Ascending aorta (tissue), 2 donors: ENCODE measurements at regions of chr10 and their contacts with region 1.

Region 1: DNA sequence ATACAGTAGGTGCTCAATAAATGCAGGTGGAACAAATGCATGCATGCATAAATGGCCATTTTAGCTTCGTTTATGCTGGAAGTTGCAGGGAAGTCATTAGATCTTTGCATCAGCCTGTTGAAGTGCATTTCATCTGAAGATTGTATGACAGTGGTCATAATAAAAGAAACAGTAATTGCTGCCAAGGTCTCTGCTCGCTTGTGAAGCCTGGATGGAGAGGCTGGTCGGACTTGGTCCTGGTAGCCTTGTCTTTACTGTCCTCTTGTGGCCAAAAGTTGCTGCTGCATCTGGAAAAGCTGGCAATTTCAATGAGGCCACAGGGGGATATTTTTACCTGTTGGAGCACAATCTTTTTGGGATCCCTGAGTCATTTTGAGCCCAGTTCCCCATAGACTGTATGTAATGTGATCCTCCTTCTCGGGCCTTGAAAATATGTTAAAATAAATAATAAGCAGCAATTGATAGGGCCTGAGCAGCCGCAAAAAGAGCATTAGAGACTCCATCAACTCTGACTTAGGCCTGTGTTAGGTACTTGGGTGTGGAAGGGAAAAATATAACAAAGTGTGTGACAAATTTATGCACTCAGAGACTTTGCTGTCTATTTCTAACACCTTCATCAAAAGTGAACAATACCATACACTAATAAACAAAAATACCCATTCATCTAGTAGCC is 31.6 kb upstream of the HABP2 start:
- DNase-seq: peak in 1 of 2 donors; percentile 85
- H3K4me3 ChIP-seq: no peak overlapping the region
- H3K27ac ChIP-seq: no peak overlapping the region
- H3K4me1 ChIP-seq: peaks cover 0 to 20% of the 10 kb centered on the region in 2 donors
- H3K27me3 ChIP-seq: no peaks in the 10 kb centered on the region
- CTCF ChIP-seq: peak; percentile 96 to 99 (median 97)

Region 2: GRCh38 chr10:113126229-113127201 is 394.7 kb before region 1 on chr10:
- intact Hi-C with region 1: loop called (anchors 5 kb)
- DNase-seq: peak in 1 of 2 donors; percentile 85
- H3K4me3 ChIP-seq: peak overlapping the region; percentile 55 to 61
- H3K27ac ChIP-seq: no peak overlapping the region
- H3K4me1 ChIP-seq: peaks cover 0 to 6% of the 10 kb centered on the region in 2 donors
- H3K27me3 ChIP-seq: no peaks in the 10 kb centered on the region
- CTCF ChIP-seq: peak; percentile 35 to 87 (median 36)

Region 3: GRCh38 chr10:113441220-113441619 is 80.0 kb before region 1 on chr10:
- intact Hi-C with region 1: loop called (anchors 2 kb)
- DNase-seq: no peak
- H3K4me3 ChIP-seq: no peak overlapping the region
- H3K27ac ChIP-seq: no peak overlapping the region
- H3K4me1 ChIP-seq: no peaks in the 10 kb centered on the region
- H3K27me3 ChIP-seq: no peaks in the 10 kb centered on the region
- CTCF ChIP-seq: peak in 2 of 3 experiments; percentile 17 to 40

Region 4: GRCh38 chr10:113491967-113492580 is 29.2 kb before region 1 on chr10:
- intact Hi-C with region 1: loop called (anchors 2 kb)
- DNase-seq: no peak
- H3K4me3 ChIP-seq: peak overlapping the region; percentile 11 to 51
- H3K27ac ChIP-seq: peak overlapping the region; percentile 63 to 82
- H3K4me1 ChIP-seq: peaks cover 4 to 49% of the 10 kb centered on the region in 2 donors
- H3K27me3 ChIP-seq: no peaks in the 10 kb centered on the region
- CTCF ChIP-seq: no peak